ENCODE measurements at regions of chr3 and their contacts with region 1.

Region 1: GRCh38 chr3:127544192-127544802 is 46.2 kb downstream of the TPRA1 start:
- DNase-seq: no peak
- H3K4me3 ChIP-seq: no peak overlapping the region
- H3K27me3 ChIP-seq: peaks cover 1% of the 10 kb centered on the region; the same call in 1 of the 2 replicates
- CTCF ChIP-seq: peak; percentile 87

Region 2: DNA sequence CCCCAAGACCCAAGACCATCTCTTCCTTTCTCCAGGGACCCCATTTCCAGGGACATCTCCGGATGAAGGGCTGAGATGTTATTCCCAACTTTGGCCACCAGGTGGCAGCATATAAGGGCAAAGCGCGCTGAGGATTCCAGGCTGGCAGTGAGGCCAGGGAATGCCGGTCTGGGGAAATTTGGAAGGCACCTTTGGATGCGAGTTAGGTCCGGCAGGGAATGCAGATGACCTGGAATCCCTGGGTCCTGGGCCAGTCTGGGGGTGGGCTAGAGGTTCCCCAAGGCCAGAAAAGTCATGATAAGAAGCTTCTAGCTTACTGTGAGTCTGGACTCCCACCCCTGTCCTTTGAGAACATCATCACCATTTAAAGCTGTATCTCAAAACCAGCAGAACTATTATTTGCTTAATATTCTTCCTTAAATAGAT is 1021.9 kb before region 1 on chr3:
- CTCF ChIA-PET with region 1: interaction called, 30 read pairs
- POLR2A ChIA-PET with region 1: no interaction called
- DNase-seq: no peak
- H3K4me3 ChIP-seq: no peak overlapping the region
- H3K27me3 ChIP-seq: peaks cover 15% of the 10 kb centered on the region
- CTCF ChIP-seq: peak; percentile 88

Region 3: DNA sequence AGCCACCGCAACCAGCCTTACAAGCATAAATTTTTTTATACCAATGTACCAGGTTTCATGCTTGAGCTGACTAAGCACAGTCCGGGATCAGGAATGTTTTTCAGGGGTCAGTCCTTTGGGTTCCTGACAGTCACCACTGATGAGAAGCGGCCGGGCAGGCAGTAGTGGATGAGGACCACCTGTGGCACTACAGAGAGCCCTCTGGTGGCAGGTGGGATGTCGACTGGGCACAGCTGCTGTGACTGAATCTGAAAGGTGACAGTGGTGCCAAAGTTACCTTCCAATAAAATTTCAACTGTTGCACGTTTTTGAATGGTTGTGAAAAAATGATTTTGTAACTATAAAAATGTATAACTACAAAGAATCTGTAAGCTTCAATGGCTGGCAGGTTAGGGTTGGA is 12.3 kb after region 1 on chr3:
- CTCF ChIA-PET with region 1: interaction called, 18 read pairs
- POLR2A ChIA-PET with region 1: no interaction called
- DNase-seq: no peak
- H3K4me3 ChIP-seq: no peak overlapping the region
- H3K27me3 ChIP-seq: peaks cover 5% of the 10 kb centered on the region
- CTCF ChIP-seq: no peak

Region 4: GRCh38 chr3:127565711-127566110 is 21.4 kb after region 1 on chr3:
- CTCF ChIA-PET with region 1: interaction called, 15 read pairs
- POLR2A ChIA-PET with region 1: no interaction called
- DNase-seq: no peak
- H3K4me3 ChIP-seq: no peak overlapping the region
- H3K27me3 ChIP-seq: peaks cover 2% of the 10 kb centered on the region; the same call in 1 of the 2 replicates
- CTCF ChIP-seq: no peak

Measured in BJ (cell line).